Sciatic nerve (tissue), 2 donors: ENCODE measurements at regions of chr13 and their contacts with region 1.

Region 1: DNA sequence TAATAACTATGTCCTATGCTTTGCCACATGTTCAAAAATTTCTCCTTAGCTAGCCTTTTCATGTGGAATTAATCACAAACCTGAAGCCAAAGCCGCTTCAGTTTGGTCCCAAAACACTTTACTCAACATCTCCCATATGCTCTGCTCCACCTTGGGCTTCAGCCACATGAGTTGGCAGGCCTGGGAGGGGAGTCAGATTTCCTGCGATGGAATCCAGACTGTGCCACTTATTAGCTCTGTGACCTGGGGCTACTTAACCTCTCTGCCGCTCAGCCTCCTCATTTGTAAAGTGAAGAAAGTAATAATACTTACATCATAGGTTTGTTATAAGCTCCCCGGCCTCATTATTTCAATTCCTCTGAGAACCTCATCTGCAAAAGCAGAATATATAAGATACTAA is 272.0 kb downstream of the LMO7 start:
- DNase-seq: no peak
- ATAC-seq: no peak

Region 2: DNA sequence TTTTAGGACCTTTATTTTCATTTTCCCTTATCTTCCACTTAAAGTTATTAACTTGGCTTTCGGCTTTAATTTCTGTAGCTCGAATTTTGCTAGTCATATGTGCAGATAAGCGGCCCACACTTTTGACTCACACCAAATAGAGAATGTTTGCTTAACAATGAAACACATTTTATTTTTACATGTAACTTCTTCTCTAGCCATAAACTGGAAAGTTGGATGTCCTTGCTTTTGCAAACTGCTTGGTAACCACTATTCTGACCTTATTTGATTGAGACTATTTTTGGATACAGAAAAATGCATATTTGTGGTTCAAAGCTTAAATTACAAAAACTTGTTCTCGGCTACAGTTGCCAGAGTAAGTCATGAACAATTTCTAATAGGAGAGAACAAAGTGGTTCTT is 378.0 kb after region 1 on chr13:
- intact Hi-C with region 1: no loop called
- DNase-seq: no peak
- ATAC-seq: peak; percentile 73

Region 3: GRCh38 chr13:77584106-77584505 is 1676.0 kb after region 1 on chr13:
- intact Hi-C with region 1: no loop called
- DNase-seq: no peak
- ATAC-seq: no peak

Region 4: DNA sequence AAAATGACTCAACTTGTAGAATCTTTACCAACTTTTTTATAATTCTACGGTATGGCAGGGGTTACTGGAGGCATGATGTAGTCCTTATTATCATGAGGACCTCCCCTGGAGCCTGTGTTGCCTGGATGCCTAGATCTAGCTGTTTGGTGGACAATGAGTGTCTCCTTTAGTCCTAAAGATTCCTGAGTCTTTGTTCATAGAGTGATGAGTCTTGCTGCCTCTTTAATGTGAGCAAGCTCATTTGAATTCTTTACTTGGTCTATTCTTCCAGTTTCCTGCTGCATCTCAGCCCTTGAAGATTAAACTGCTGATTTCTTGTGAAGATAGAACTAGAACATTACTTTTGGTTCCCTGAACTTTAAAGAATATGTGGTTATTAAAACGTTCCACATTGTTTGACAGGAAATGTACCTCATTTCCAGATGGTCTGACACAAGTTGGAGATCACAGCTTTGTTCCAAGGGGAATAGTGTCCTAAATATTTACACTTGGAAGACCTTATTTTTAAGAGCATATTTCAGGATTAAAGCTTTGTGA is 1841.3 kb after region 1 on chr13:
- intact Hi-C with region 1: loop called (anchors 5 kb)
- DNase-seq: no peak
- ATAC-seq: no peak